Activated CD8-positive, alpha-beta T cell treated with anti-CD3 and anti-CD28 coated beads for 36 hours (primary cell): ENCODE measurements at regions of chr22 and their contacts with region 1.

Region 1: GRCh38 chr22:40636380-40637182 is at the start of gene MRTFA:
- DNase-seq: peak; percentile 100
- ATAC-seq: peak; percentile 96
- H3K4me3 Mint-ChIP-seq: peak within 1 kb of the TSS; percentile 81
- H3K27ac Mint-ChIP-seq: peak within 1 kb of the TSS; percentile 96
- H3K4me1 Mint-ChIP-seq: peaks cover 36% of the 10 kb centered on the region
- H3K27me3 Mint-ChIP-seq: no peaks in the 10 kb centered on the region
- CTCF ChIP-seq: no peak
- total RNA-seq, gene MRTFA: 37.4 to 40.0 TPM

Region 2: GRCh38 chr22:40525249-40525884 is 111.2 kb before region 1 on chr22:
- CTCF ChIA-PET with region 1: interaction called, 19 read pairs
- POLR2A ChIA-PET with region 1: interaction called, 10 read pairs
- intact Hi-C with region 1: loop called (anchors 5 kb)
- DNase-seq: peak; percentile 85
- ATAC-seq: peak; percentile 69
- H3K4me3 Mint-ChIP-seq: no peak overlapping the region
- H3K27ac Mint-ChIP-seq: no peak overlapping the region
- H3K4me1 Mint-ChIP-seq: peaks cover 43% of the 10 kb centered on the region
- H3K27me3 Mint-ChIP-seq: no peaks in the 10 kb centered on the region
- CTCF ChIP-seq: peak; percentile 91

Region 3: DNA sequence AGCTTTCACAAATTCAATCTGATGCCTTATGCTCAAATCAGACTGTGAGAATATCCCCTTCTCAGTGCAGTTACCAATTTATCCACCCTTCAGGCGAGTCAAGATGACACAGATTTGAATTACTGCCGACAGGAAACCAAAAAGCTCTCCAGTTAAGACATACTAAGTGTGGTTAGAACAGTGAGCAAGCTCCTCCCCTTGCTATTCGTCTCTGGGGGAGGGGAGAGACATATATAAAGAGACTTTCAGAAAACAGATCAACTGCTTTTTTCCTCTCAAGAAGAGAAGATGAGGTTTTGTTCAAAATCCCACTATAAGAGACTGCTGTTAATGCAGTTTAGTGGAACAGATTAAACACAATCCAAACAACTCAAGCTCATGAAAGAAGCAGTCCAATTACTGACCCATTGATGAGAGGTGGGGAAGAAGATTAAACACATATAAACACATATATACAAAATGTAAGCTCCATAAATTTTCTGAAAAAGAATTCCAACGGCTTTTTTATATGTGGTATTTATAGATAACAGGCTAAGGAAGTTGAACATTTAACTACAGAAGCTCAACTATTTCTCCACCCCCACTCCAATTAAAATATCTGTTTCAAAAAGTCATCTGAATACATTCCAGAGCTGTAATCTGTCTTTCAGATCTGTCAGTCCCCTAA is 102.7 kb before region 1 on chr22:
- CTCF ChIA-PET with region 1: interaction called, 6 read pairs
- POLR2A ChIA-PET with region 1: interaction called, 10 read pairs
- intact Hi-C with region 1: loop called (anchors 5 kb)
- DNase-seq: peak; percentile 77
- ATAC-seq: peak; percentile 95
- H3K4me3 Mint-ChIP-seq: peak overlapping the region; percentile 74
- H3K27ac Mint-ChIP-seq: peak overlapping the region; percentile 83
- H3K4me1 Mint-ChIP-seq: peaks cover 61% of the 10 kb centered on the region
- H3K27me3 Mint-ChIP-seq: no peaks in the 10 kb centered on the region
- CTCF ChIP-seq: no peak

Region 4: DNA sequence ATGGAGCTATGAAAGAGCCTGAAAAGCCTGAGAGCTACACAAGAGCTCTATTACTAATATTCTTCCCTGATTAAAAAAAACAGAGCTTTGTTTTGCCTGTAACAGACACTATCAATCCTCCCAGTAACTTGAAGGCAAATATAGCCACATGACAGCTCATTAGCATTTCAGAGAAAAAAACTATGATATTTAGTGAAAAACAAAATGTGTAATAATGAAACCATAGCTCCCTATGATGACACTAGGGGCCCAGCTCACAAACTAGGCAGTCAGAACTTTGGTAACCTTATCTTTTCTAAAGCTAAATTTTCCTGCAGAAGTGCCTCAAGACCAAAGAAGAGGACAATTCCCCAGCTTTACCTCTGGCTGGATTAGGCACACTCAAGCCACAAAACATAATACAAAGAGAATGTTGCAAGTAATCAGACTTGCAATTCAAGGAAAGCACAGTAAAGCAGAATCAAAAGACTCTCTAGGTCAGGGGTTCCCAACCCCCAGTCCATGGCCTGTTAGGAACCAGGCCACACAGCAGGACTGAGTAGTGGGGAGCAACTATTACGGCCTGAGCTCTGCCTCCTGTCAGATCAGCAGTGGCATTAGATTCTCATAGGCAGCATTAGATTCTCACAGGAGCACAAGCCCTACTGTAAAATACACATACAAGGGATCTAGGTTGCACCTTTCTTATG is 53.4 kb before region 1 on chr22:
- CTCF ChIA-PET with region 1: no interaction called
- POLR2A ChIA-PET with region 1: no interaction called
- intact Hi-C with region 1: no loop called
- DNase-seq: peak; percentile 12
- ATAC-seq: peak; percentile 73
- H3K4me3 Mint-ChIP-seq: no peak overlapping the region
- H3K27ac Mint-ChIP-seq: peak overlapping the region; percentile 77
- H3K4me1 Mint-ChIP-seq: peaks cover 35% of the 10 kb centered on the region
- H3K27me3 Mint-ChIP-seq: no peaks in the 10 kb centered on the region
- CTCF ChIP-seq: no peak

Region 5: DNA sequence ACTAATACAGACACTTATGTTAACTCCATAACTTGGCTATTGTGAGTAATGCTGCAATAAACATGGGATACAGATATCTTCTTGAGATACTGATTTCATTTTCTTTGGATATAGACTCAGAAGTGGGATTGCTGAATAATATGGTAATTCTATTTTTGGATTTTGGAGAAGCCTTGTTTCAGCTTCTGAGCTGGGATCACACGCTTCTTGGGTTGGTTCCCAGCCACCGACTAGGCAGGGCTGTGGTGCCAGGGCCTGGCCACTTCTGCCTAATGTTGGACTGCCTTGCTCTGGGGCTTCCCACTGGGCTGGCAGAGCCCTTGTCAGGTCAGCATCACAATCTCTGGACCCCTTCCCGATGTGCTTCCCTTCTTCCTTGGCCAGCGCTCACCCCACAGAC is 28.7 kb after region 1 on chr22:
- CTCF ChIA-PET with region 1: no interaction called
- POLR2A ChIA-PET with region 1: no interaction called
- intact Hi-C with region 1: no loop called
- DNase-seq: no peak
- ATAC-seq: no peak
- H3K4me3 Mint-ChIP-seq: no peak overlapping the region
- H3K27ac Mint-ChIP-seq: no peak overlapping the region
- H3K4me1 Mint-ChIP-seq: peaks cover 19% of the 10 kb centered on the region
- H3K27me3 Mint-ChIP-seq: no peaks in the 10 kb centered on the region
- CTCF ChIP-seq: no peak